Naive thymus-derived CD4-positive, alpha-beta T cell (primary cell): ENCODE measurements at regions of chr10 and their contacts with region 1.

Region 1: DNA sequence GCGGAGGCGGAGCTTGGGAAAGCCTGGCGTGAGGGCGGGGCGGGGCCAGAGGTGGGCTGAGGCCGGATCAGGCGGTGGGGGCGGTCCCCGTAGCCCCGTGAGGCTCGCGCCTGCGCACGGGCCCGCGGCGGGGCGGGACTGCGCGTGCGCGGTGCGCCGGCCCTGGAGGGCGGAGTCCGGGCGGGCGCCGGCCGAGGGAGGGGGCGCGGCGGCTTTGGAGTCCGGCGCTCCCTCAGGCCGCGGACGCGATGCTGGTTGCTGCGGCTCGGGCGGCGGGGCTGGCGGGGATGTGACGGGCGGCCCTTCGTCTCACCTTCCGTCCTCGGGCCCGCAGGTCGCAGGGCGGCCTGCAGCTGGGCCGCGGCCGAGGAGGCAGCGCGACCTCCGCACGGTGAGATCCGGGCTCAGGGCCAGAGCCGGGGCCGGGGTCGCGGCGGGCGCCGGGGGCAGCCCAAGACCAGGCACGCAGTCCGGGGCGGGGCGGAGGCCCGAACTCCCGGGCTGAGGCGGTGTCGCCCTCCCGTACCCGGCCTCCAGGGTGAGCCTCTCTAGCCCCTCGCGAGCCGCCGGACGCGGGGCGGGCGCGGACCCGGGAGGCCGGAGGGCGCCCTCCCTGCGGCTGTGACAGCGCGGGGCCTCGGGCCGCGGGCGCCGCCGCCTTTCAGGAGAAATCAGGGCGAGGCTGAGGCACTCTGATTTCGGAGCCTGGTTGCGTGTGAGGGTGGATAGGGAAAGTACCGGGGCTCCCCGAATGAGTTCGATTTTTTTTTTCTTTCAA is at the start of gene CCSER2:
- DNase-seq: peak; percentile 83 to 99 (median 88)
- ATAC-seq: peak; percentile 83
- H3K4me3 ChIP-seq: peak within 1 kb of the TSS; percentile 74
- H3K4me3 Mint-ChIP-seq: peak within 1 kb of the TSS; percentile 91 to 99 (median 94)
- H3K27ac ChIP-seq: peak within 1 kb of the TSS; percentile 100
- H3K27ac Mint-ChIP-seq: peak within 1 kb of the TSS; percentile 92 to 99 (median 97)
- H3K4me1 ChIP-seq: peaks cover 22 to 26% of the 10 kb centered on the region in 2 donors
- H3K4me1 Mint-ChIP-seq: peaks cover 21 to 40% (median 33%) of the 10 kb centered on the region in 7 donors
- H3K27me3 ChIP-seq: no peaks in the 10 kb centered on the region
- H3K27me3 Mint-ChIP-seq: peaks cover 0 to 22% (median 0%) of the 10 kb centered on the region in 5 donors
- total RNA-seq, gene CCSER2: 91.1 to 133 (median 114) TPM

Region 2: DNA sequence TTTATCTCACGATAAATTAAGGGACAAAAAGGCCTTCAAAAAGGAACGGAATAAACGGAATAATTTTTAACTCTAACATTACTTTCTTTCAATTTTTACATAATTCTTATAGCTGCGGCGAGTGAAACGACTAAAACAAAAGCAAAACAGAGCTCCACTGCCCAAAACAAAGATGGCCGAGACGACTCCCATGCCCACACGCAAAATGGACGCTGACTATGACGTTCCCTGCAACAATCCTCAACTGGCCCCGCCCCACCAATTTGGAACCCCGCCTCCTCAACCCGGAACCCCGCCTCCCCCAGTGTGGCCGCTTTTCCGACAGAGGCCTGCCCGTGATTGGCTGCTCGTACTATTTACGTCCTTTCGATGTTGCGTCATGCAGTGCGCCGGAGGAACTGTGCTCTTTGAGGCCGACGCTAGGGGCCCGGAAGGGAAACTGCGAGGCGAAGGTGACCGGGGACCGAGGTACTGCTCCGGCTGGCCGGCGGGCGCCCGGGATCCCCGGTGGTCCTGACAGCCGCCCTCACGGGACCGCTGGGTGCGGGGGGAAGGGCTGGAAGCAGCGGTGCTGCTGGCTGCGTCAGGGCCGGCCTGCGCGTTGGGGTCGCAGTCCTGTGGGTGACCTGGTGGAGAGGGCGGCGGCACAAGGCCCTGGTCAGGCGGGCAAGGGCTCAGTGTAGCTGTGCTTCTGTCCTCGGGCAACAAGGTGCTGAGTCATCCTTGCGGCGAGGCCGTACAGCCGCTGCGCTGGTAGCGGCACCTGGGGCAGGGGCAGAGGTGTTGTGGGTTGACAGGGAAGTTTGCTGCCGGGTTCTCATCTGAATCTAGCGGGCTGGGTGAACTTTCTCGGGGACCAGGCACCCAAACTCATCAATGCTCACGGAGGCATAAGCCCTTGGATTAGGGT is 189.2 kb before region 1 on chr10 and contains the start of gene GHITM:
- CTCF ChIA-PET with region 1: no interaction called
- POLR2A ChIA-PET with region 1: no interaction called
- intact Hi-C with region 1: loop called (anchors 1 kb)
- DNase-seq: peak; percentile 98 to 100 (median 100)
- ATAC-seq: peak; percentile 97
- H3K4me3 ChIP-seq: peak within 1 kb of the TSS; percentile 92
- H3K4me3 Mint-ChIP-seq: peak within 1 kb of the TSS; percentile 88 to 98 (median 94)
- H3K27ac ChIP-seq: peak within 1 kb of the TSS; percentile 98
- H3K27ac Mint-ChIP-seq: peak within 1 kb of the TSS; percentile 93 to 99 (median 98)
- H3K4me1 ChIP-seq: peaks cover 15 to 18% of the 10 kb centered on the region in 2 donors
- H3K4me1 Mint-ChIP-seq: peaks cover 20 to 45% (median 36%) of the 10 kb centered on the region in 7 donors
- H3K27me3 ChIP-seq: no peaks in the 10 kb centered on the region
- H3K27me3 Mint-ChIP-seq: peaks cover 0 to 10% (median 0%) of the 10 kb centered on the region in 5 donors
- total RNA-seq, gene GHITM: 61.5 to 115 (median 76.3) TPM

Region 3: DNA sequence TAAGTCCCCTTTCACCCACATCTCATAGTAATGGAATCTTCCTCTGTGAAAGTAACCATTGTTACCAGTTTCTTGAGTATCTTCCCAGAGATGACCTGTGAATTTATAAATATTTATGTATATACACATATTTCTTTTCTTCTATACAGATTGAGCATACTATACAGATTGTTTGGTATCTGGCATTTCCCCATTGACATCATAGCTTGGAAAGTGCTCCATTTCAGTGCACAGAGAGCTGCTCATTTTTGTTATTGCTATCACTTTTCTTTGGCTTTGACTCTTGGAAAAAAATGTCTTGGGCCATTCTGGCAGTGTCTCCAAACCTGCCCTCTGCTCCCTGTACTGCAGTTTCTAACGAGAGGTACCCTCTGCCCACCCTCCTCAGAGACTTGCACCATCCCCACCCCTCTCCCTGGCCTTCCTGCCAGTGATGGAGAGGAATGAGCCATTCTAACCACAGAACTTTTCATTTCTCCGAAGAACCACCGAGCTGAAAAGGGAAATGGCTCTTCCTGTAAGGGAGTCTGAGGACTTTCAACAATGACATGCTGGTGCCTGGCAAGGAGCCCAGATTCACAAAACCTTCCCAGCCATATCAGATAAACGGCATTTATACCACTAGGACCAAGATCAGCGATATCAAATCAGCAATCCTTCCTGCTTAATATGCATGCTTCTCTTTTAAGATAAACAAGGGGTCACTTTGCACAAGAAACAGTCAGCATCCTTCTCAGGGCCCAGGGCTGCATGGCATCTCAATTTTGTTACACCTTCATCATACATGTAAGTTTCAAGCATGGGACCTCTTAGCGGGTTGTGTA is 19.9 kb before region 1 on chr10:
- CTCF ChIA-PET with region 1: no interaction called
- POLR2A ChIA-PET with region 1: interaction called, 13 read pairs
- intact Hi-C with region 1: loop called (anchors 1 to 2 kb)
- DNase-seq: peak in 7 of 9 donors; percentile 15 to 46 (median 31)
- ATAC-seq: peak; percentile 45
- H3K4me3 ChIP-seq: no peak overlapping the region
- H3K4me3 Mint-ChIP-seq: peak overlapping the region in 9 of 10 donors; percentile 9 to 75 (median 61)
- H3K27ac ChIP-seq: no peak overlapping the region
- H3K27ac Mint-ChIP-seq: peak overlapping the region in 6 of 9 donors; percentile 8 to 69 (median 40)
- H3K4me1 ChIP-seq: peaks cover 0 to 15% of the 10 kb centered on the region in 2 donors
- H3K4me1 Mint-ChIP-seq: peaks cover 10 to 43% (median 13%) of the 10 kb centered on the region in 7 donors
- H3K27me3 ChIP-seq: no peaks in the 10 kb centered on the region
- H3K27me3 Mint-ChIP-seq: peaks cover 0 to 8% (median under 1%) of the 10 kb centered on the region in 5 donors

Region 4: GRCh38 chr10:84352251-84352842 is 23.7 kb after region 1 on chr10:
- CTCF ChIA-PET with region 1: interaction called, 3 read pairs
- POLR2A ChIA-PET with region 1: interaction called, 5 read pairs
- intact Hi-C with region 1: loop called (anchors 1 kb)
- DNase-seq: peak; percentile 33 to 68 (median 55)
- ATAC-seq: peak; percentile 94
- H3K4me3 ChIP-seq: no peak overlapping the region
- H3K4me3 Mint-ChIP-seq: peak overlapping the region in 3 of 10 donors; percentile 18 to 56 (median 35)
- H3K27ac ChIP-seq: no peak overlapping the region
- H3K27ac Mint-ChIP-seq: no peak overlapping the region
- H3K4me1 ChIP-seq: peaks cover 30 to 46% of the 10 kb centered on the region in 2 donors
- H3K4me1 Mint-ChIP-seq: peaks cover 47 to 87% (median 80%) of the 10 kb centered on the region in 7 donors
- H3K27me3 ChIP-seq: no peaks in the 10 kb centered on the region
- H3K27me3 Mint-ChIP-seq: no peaks in the 10 kb centered on the region

Region 5: DNA sequence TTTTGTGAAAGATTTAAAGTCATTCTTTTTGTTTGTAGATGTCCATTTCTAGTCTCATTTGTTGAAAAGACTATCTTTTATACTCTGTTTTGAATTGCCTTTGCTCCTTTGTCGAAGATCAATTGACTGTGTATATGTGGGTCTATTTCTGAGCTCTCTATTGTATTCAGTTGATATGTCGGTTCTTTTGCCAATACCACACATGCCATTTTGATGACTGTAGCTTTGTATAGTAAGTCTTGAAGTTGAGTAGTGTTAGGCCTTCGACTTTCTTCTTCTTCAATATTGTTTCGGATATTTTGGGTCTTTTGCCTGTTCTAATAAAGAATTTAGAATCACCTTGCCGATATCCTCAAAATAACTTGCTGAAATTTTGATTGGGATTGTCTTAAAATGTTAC is 104.3 kb after region 1 on chr10:
- CTCF ChIA-PET with region 1: no interaction called
- POLR2A ChIA-PET with region 1: no interaction called
- intact Hi-C with region 1: no loop called
- DNase-seq: no peak
- ATAC-seq: no peak
- H3K4me3 ChIP-seq: no peak overlapping the region
- H3K4me3 Mint-ChIP-seq: no peak overlapping the region
- H3K27ac ChIP-seq: no peak overlapping the region
- H3K27ac Mint-ChIP-seq: peak overlapping the region in 2 of 9 donors; percentile 37 to 48
- H3K4me1 ChIP-seq: peaks cover 0 to 8% of the 10 kb centered on the region in 2 donors
- H3K4me1 Mint-ChIP-seq: peaks cover 22 to 62% (median 53%) of the 10 kb centered on the region in 7 donors
- H3K27me3 ChIP-seq: no peaks in the 10 kb centered on the region
- H3K27me3 Mint-ChIP-seq: no peaks in the 10 kb centered on the region

Region 6: DNA sequence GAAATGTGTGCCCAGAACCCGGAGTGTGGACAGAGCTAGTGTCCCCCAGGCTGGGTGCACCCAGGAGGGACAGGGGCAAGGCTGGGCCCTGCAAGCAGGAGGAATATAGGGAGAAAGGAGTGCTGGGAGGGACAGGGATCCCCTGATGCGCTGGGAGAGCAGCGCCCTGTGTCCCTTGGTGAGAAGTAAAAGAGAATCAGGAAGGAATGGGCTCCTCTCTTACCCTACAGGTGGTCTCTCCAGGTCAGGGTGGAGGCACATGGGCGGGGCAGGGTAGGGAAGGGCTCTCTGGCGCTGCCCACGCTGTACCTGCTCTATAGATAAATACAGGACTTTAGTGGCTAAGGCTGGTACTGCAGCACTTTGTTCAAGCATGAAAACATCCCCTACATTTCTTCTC is 1284.2 kb after region 1 on chr10:
- CTCF ChIA-PET with region 1: no interaction called
- POLR2A ChIA-PET with region 1: no interaction called
- intact Hi-C with region 1: loop called in 1 of 2 experiments (anchors 5 kb)
- DNase-seq: peak in 4 of 9 donors; percentile 19 to 35 (median 24)
- ATAC-seq: peak; percentile 56
- H3K4me3 ChIP-seq: peak overlapping the region; percentile 44
- H3K4me3 Mint-ChIP-seq: peak overlapping the region; percentile 69 to 88 (median 78)
- H3K27ac ChIP-seq: no peak overlapping the region
- H3K27ac Mint-ChIP-seq: peak overlapping the region; percentile 54 to 94 (median 83)
- H3K4me1 ChIP-seq: peaks cover 36 to 44% of the 10 kb centered on the region in 2 donors
- H3K4me1 Mint-ChIP-seq: peaks cover 30 to 81% (median 71%) of the 10 kb centered on the region in 7 donors
- H3K27me3 ChIP-seq: no peaks in the 10 kb centered on the region
- H3K27me3 Mint-ChIP-seq: peaks cover 0 to 34% (median 0%) of the 10 kb centered on the region in 5 donors